Esophagus muscularis mucosa (tissue), 4 donors: ENCODE measurements at regions of chr3 and their contacts with region 1.

Region 1: DNA sequence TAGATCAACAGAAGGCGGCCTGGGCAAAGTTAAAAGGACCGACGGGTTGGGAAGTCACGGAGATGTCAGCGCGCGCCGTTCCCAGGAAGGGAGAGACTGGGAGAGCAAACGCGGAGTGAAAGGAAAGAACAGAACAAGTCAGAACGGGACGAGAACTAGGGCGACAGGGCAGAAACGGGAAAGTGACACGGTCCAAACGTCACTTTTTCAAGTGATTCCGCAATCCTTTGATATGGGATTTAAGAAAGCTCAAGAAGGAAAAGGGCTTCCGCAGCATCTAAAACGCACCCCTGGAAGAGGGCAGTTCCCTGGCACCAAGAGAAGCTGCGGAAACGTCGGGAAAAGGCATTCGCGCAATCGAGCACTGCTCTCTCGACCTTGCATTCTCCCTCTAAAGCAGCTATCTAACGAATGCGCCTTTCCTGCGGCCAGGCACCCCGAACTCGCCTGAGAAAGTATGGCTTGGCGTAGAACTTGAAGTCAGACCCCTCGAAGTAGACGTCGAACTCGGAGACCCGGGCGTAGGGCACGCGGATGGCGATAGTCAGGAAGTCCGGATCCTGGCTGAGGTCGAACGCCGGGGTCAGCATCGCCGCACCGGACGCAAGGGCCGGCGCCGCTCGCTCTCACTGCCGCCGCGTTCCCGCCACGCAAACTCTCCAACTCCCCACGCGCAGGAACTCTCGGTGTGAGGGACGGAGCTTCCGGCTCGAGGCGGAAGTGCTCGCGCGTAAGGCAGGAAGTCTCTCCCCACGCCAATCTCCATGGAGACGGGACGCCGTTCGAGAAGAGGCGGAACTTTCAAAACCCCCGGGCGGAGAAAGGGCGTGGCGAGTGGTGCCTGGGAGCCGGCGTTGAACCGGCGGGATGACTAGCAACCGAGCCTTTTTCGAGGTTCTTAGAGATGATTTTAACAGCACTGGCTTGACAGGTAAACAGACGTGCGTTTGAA is at the start of gene SHQ1:
- DNase-seq: peak; percentile 98
- H3K4me3 ChIP-seq: peak within 1 kb of the TSS; percentile 75 to 92 (median 78)
- H3K27ac ChIP-seq: peak within 1 kb of the TSS; percentile 75 to 87 (median 82)
- H3K4me1 ChIP-seq: peaks cover 17 to 43% (median 31%) of the 10 kb centered on the region in 4 donors
- H3K27me3 ChIP-seq: no peaks in the 10 kb centered on the region
- CTCF ChIP-seq: no peak
- EP300 ChIP-seq: no peak
- POLR2A ChIP-seq: no peak
- total RNA-seq, gene SHQ1: 8.7 to 19.9 (median 12.4) TPM

Region 2: DNA sequence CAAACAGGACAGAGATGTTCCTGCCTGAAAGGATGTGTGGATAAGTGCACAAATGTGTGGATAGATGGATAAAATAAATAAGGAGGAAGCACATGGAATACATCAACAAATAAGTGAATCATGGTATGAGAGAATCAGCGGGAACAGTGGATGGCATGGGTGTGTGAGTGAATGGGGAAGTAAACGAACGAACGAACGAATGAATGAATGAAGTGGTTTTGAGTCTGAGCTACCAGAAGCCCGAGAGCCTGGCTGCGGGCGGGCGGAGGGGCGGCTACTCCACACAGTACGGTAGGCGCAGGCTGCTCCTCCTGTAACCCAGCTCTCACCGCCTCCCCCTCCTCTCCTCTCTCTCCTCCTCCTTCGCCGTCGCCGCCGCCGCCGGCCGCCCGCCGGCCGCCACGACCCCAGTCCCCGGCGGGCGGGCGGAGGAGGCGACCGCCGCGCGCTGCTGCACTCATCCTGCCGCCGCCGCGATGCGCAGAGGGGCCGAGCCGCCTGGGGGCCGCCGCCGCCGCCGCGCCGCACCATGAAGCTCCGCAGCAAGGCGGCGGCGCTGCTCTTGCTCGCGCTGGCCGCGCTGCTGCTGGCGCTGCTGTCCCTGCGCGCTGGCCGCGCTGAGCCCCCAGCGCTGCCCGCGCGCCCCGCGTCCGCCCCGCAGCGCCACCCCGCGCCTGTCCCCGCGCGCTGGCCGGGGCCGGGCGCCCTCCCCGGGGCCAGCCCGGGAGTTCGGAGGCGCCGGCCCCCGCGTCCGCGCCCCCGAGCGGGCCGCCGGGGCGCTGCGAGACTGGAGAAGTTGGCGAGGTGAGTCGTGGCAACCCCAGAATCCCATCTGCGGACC is 39.9 kb after region 1 on chr3 and contains the start of gene GXYLT2:
- intact Hi-C with region 1: loop called (anchors 5 kb)
- DNase-seq: no peak
- H3K4me3 ChIP-seq: peak within 1 kb of the TSS; percentile 54 to 65 (median 56)
- H3K27ac ChIP-seq: peak within 1 kb of the TSS; percentile 66 to 80 (median 74)
- H3K4me1 ChIP-seq: peaks cover 9 to 50% (median 37%) of the 10 kb centered on the region in 4 donors
- H3K27me3 ChIP-seq: no peaks in the 10 kb centered on the region
- CTCF ChIP-seq: peak in 1 of 3 experiments; percentile 12
- EP300 ChIP-seq: no peak
- POLR2A ChIP-seq: no peak
- total RNA-seq, gene GXYLT2: 5.0 to 9.8 (median 7.6) TPM

Region 3: GRCh38 chr3:72899349-72899765 is 51.3 kb after region 1 on chr3:
- intact Hi-C with region 1: no loop called
- DNase-seq: no peak
- H3K4me3 ChIP-seq: no peak overlapping the region
- H3K27ac ChIP-seq: no peak overlapping the region
- H3K4me1 ChIP-seq: peaks cover 0 to 4% (median 0%) of the 10 kb centered on the region in 4 donors
- H3K27me3 ChIP-seq: no peaks in the 10 kb centered on the region
- CTCF ChIP-seq: no peak
- EP300 ChIP-seq: no peak
- POLR2A ChIP-seq: no peak

Region 4: GRCh38 chr3:73056014-73056844 is 208.2 kb after region 1 on chr3:
- intact Hi-C with region 1: loop called (anchors 10 kb)
- DNase-seq: no peak
- H3K4me3 ChIP-seq: no peak overlapping the region
- H3K27ac ChIP-seq: no peak overlapping the region
- H3K4me1 ChIP-seq: peaks cover 10 to 36% (median 23%) of the 10 kb centered on the region in 4 donors
- H3K27me3 ChIP-seq: no peaks in the 10 kb centered on the region
- CTCF ChIP-seq: peak; percentile 48 to 64 (median 52)
- EP300 ChIP-seq: no peak
- POLR2A ChIP-seq: no peak